Activated CD4-positive, alpha-beta T cell treated with anti-CD3 and anti-CD28 coated beads, Interleukin-2, amount 10 ng/mL, durations not matched to agents 7 days and 5 days (primary cell): ENCODE measurements at regions of chr7 and their contacts with region 1.

Region 1: DNA sequence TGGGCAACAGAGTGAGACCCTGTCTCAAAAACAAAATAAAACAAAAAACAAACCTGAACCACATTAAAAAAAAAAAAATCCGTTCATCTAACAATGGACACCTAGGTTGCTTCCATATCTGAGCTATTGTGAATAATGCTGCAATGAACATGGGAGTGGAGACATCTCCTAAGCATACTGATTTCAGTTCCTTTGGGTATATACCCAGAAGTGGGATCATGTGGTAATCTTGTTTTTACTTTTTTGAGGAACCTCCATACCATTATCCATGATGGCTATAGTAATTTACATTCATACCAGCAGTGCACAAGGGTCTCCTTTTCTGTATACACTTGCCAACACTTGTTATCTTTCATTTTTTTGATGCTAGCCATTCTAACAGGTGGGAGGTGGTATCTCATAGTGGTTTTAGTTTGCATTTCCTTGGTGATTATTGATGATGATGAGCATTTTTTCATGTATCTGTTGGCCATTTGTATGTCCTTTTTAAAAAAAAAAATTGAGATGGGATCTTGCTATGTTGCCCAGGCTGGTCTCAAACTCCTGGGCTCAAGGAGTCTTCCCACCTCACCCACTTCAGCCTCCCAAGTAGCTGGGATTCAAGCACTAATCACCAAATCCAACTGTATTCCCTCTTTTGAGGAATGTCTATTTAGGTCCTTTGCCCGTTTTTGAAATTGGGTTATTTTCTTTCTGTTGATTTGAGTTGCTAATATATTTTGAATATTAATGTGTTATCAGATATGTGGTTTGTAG is 17.5 kb downstream of the CDK13 start:
- DNase-seq: no peak
- H3K4me3 Mint-ChIP-seq: no peak overlapping the region
- H3K27ac Mint-ChIP-seq: no peak overlapping the region
- H3K4me1 Mint-ChIP-seq: peaks cover 38% of the 10 kb centered on the region
- H3K27me3 Mint-ChIP-seq: no peaks in the 10 kb centered on the region

Region 2: DNA sequence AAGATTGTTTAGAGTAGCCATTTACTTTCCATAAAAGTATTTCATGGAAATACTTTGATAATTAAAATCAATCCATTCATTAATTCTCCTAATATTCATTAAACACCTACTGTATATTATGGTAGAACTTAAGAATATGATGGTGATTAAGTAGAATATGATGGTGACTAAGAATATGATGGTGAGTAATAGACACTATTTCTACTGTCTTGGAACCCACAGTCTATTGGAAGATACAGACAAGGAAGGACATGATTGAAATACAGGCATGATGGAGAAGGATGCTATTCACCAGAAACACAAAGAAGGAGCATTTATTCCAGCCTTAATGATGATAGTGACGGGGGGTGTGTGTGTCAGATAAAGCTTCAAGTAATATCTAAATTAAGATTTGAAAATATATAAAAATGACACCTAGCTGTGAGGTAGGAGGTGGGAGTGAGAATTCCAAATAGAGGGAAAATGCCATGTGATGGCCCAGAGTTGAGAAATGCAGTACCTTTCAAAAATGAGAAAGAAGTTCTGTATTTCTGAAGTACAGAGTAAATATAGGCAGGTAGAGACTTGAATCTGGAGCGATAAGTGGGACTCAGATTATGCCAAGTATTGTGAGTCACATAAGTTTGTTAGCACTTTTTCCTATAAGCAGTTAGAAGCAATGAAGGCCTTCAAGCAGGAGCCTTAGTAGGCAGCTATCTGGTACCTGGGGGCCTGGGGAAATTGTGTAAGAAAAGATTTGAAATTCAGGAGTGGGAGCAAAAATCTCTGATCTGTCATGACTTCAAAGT is 30.0 kb before region 1 on chr7:
- CTCF ChIA-PET with region 1: no interaction called
- POLR2A ChIA-PET with region 1: interaction called, 10 read pairs
- DNase-seq: no peak
- H3K4me3 Mint-ChIP-seq: no peak overlapping the region
- H3K27ac Mint-ChIP-seq: no peak overlapping the region
- H3K4me1 Mint-ChIP-seq: peaks cover 3% of the 10 kb centered on the region
- H3K27me3 Mint-ChIP-seq: peaks cover 3% of the 10 kb centered on the region

Region 3: GRCh38 chr7:40474790-40475680 is 507.5 kb after region 1 on chr7:
- CTCF ChIA-PET with region 1: no interaction called
- POLR2A ChIA-PET with region 1: no interaction called
- DNase-seq: no peak
- H3K4me3 Mint-ChIP-seq: no peak overlapping the region
- H3K27ac Mint-ChIP-seq: peak overlapping the region; percentile 46
- H3K4me1 Mint-ChIP-seq: peaks cover 16% of the 10 kb centered on the region
- H3K27me3 Mint-ChIP-seq: peaks cover 5% of the 10 kb centered on the region